SK-N-SH (cell line): ENCODE measurements at regions of chr17 and their contacts with region 1.

Region 1: GRCh38 chr17:35764123-35764991 is 3.7 kb downstream of the C17orf50 start:
- DNase-seq: peak; percentile 98
- H3K4me3 ChIP-seq: peak overlapping the region; percentile 56
- H3K27ac ChIP-seq: peak overlapping the region in 1 of 2 experiments; percentile 77; a peak in 2 of 4 replicates
- H3K4me1 ChIP-seq: peaks cover 0 to 15% of the 10 kb centered on the region in 2 experiments; a peak in 1 of 4 replicates
- H3K27me3 ChIP-seq: no peaks in the 10 kb centered on the region
- CTCF ChIP-seq: peak; percentile 62
- EP300 ChIP-seq: no peak
- RAD21 ChIP-seq: peak; percentile 86

Region 2: GRCh38 chr17:35578197-35578928 is 186.0 kb before region 1 on chr17 and contains the start of gene PEX12:
- CTCF ChIA-PET with region 1: interaction called, 17 read pairs
- POLR2A ChIA-PET with region 1: no interaction called
- DNase-seq: peak; percentile 87
- H3K4me3 ChIP-seq: peak within 1 kb of the TSS; percentile 89 to 94
- H3K27ac ChIP-seq: peak within 1 kb of the TSS; percentile 58 to 93
- H3K4me1 ChIP-seq: peaks cover 0 to 16% of the 10 kb centered on the region in 2 experiments; a peak in 3 of 4 replicates
- H3K27me3 ChIP-seq: no peaks in the 10 kb centered on the region
- CTCF ChIP-seq: 0 out of 2 replicates have a peak, but pooled peaks have one; percentile 12
- EP300 ChIP-seq: 0 out of 4 replicates have a peak, but pooled peaks of 1 of the 2 experiments have one; percentile 12
- RAD21 ChIP-seq: no peak
- polyA plus RNA-seq, gene PEX12: 4.3 and 5.4 TPM in 2 replicates

Region 3: DNA sequence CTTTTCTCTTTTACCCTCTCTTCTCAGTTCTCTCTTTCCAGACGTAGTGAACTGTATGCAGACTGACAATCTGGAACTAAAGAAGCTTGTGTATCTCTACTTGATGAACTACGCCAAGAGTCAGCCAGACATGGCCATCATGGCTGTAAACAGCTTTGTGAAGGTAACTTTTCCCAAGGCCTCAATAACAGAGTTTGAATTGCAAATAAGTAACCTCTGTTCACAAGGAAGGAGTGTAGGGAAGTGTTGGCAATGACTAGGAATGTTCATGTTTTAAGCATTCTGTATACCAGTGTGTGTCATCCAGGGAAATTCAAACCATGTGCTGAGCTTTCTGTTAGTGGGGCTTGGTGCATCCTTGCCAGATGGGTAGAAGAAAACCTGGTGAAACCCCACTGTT is 158.7 kb before region 1 on chr17:
- CTCF ChIA-PET with region 1: interaction called, 13 read pairs
- POLR2A ChIA-PET with region 1: no interaction called
- DNase-seq: no peak
- H3K4me3 ChIP-seq: no peak overlapping the region
- H3K27ac ChIP-seq: peak overlapping the region in 1 of 2 experiments; percentile 34; a peak in 2 of 4 replicates
- H3K4me1 ChIP-seq: no peaks in the 10 kb centered on the region
- H3K27me3 ChIP-seq: no peaks in the 10 kb centered on the region
- CTCF ChIP-seq: no peak
- EP300 ChIP-seq: no peak
- RAD21 ChIP-seq: no peak

Region 4: GRCh38 chr17:35726127-35726952 is 38.0 kb before region 1 on chr17:
- CTCF ChIA-PET with region 1: interaction called, 10 read pairs
- POLR2A ChIA-PET with region 1: no interaction called
- DNase-seq: no peak
- H3K4me3 ChIP-seq: no peak overlapping the region
- H3K27ac ChIP-seq: peak overlapping the region; percentile 67 to 83
- H3K4me1 ChIP-seq: peaks cover 18 to 23% of the 10 kb centered on the region in 2 experiments; a peak in 3 of 4 replicates
- H3K27me3 ChIP-seq: no peaks in the 10 kb centered on the region
- CTCF ChIP-seq: no peak
- EP300 ChIP-seq: peak; percentile 8 to 11; a peak in 2 of 4 replicates
- RAD21 ChIP-seq: no peak

Region 5: DNA sequence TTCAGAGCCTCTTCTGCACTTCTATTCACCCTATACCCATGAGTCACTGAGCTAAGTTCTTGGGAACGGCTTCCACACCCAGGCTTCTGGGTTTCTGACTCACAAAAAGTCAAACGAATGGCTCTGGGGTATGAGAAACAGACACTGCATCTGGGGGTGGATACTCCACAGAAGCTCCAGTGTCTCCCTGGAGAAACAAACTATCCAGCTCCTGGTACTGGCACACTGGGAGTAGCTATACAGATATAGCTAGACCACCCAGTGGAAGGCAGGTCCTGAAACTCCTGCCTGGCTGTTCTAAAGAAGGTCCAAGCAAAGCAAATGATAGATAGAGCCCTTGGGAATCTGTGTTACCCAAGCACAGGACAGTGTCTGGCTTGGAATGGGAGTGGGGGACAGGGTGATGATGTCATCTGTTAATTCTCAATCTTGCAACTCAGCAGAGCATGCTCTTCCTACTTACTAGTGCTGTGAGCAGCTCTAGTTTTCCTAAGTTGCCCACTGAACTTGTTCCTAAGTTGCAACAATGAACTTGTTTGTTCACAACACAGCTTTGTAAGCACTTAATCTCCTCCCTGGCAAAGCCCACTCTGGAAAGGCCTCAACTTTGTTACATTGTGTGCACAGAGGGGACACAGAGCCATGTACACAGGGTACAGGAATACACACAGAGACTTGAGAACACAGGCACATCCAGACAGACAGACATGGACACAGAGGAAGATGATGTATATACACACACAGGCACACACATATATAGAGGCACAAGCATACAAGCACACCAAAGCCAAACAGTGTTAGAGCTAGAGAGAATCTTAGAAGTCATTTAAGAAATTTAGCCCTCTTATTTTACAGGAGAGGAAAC is 24.4 kb after region 1 on chr17:
- CTCF ChIA-PET with region 1: interaction called, 100 read pairs
- POLR2A ChIA-PET with region 1: no interaction called
- DNase-seq: peak; percentile 44
- H3K4me3 ChIP-seq: no peak overlapping the region
- H3K27ac ChIP-seq: peak overlapping the region; percentile 63 to 79
- H3K4me1 ChIP-seq: peaks cover 0 to 48% of the 10 kb centered on the region in 2 experiments; a peak in 3 of 4 replicates
- H3K27me3 ChIP-seq: peaks cover 16% of the 10 kb centered on the region
- CTCF ChIP-seq: no peak
- EP300 ChIP-seq: no peak
- RAD21 ChIP-seq: no peak

Region 6: GRCh38 chr17:35819456-35819855 is 55.1 kb after region 1 on chr17:
- CTCF ChIA-PET with region 1: interaction called, 809 read pairs
- POLR2A ChIA-PET with region 1: no interaction called
- DNase-seq: no peak
- H3K4me3 ChIP-seq: no peak overlapping the region
- H3K27ac ChIP-seq: no peak overlapping the region
- H3K4me1 ChIP-seq: peaks cover 2 to 6% of the 10 kb centered on the region in 2 experiments; a peak in 3 of 4 replicates
- H3K27me3 ChIP-seq: no peaks in the 10 kb centered on the region
- CTCF ChIP-seq: no peak
- EP300 ChIP-seq: no peak
- RAD21 ChIP-seq: no peak

Region 7: GRCh38 chr17:35930211-35931065 is 166.1 kb after region 1 on chr17 and contains the start of gene RDM1:
- CTCF ChIA-PET with region 1: no interaction called
- POLR2A ChIA-PET with region 1: no interaction called
- DNase-seq: peak; percentile 92
- H3K4me3 ChIP-seq: peak within 1 kb of the TSS; percentile 65 to 69
- H3K27ac ChIP-seq: no peak within 1 kb of the TSS
- H3K4me1 ChIP-seq: peaks cover 3 to 8% of the 10 kb centered on the region in 2 experiments; a peak in 2 of 4 replicates
- H3K27me3 ChIP-seq: no peaks in the 10 kb centered on the region
- CTCF ChIP-seq: no peak
- EP300 ChIP-seq: no peak
- RAD21 ChIP-seq: no peak
- polyA plus RNA-seq, gene RDM1: 1.8 and 2.5 TPM in 2 replicates

Region 8: DNA sequence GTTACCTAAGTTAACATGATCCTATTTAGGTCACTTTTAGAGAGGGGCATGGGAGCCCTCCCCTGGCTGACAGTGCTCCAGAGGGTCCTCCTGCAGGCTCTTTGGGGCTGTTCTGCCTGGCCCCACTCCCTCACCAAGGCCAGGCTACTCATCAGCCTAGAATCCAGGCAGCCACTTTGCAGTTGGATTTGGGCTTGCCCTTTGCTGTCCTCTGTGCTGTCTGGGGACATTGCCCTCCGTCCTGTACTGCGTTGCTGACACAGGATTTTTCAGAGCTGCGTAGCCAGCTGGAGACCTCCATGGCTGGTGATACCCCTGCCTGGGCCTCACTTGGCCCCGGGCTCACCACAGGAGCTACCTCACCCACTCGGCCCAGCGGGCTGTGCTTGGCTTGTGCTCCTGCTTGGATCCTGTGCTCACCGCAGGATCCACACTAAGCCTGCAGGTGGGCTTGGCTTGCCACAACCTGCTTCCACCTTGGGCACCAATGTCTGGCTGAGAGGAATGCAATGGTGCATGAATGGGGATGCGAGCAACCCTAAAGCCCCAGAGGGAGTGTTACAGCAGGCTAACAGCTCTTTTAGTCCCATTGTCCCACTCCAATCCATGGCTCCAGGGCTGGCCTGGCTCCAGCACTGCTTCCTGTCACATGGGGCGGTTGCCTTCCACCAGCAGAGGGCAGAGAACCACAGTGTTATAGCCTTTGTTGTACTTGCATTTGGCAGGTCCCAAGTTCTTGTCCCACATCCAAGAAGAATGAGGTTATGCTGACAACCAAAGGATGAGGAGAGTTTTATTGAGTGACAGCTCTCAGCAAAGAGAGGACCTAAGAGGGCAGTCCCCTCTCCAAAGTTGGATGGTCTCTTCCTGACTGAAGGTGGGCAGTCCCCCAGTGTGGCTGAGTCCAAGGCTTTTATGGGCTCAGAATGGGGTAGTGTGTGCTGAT is 360.8 kb after region 1 on chr17:
- CTCF ChIA-PET with region 1: no interaction called
- POLR2A ChIA-PET with region 1: no interaction called
- DNase-seq: no peak
- H3K4me3 ChIP-seq: no peak overlapping the region
- H3K27ac ChIP-seq: no peak overlapping the region
- H3K4me1 ChIP-seq: no peaks in the 10 kb centered on the region
- H3K27me3 ChIP-seq: no peaks in the 10 kb centered on the region
- CTCF ChIP-seq: no peak
- EP300 ChIP-seq: no peak
- RAD21 ChIP-seq: no peak